CD8-positive, alpha-beta T cell (primary cell): ENCODE measurements at regions of chr4 and their contacts with region 1.

Region 1: DNA sequence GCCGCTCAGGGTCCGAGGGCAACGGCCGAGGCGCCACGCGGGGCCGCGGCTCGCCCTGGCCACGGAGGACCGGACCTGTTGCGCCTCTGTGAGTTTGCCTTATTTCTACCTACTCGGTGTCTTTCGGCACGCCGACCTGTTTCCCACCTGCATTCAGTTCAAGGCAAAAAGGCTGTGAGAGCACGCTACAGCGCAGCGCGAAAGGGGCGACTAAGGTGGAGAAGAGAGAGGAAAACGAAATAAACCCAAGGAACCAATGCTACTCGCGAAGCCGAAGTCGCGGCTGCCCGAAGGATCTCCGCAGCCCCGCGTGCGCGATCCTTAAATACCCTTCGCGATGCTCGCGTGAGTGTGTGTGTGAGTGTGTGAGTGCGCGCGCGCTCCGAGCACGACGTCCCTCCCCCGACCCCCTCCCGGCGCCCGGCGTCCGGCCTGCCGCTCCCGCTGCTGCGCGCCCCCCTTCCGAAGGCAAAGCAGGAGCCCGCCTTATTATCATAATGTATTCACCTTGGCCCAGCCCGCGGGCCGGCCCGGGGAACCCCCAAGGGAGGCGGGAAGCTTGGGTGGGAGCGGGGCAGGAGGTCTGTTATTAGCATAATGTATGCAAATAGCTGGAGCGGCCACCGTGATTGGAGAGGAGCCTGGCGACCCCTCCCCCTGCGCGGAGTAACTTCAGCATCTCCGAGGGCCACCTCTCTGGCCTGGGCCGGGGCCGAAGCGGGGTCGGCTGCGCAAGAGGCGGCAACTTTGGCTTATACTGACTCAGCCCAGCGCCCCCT is at the start of gene COL25A1:
- DNase-seq: peak in 7 of 9 experiments; percentile 25 to 70 (median 50)
- ATAC-seq: peak; percentile 78
- H3K4me3 ChIP-seq: peak within 1 kb of the TSS; percentile 54 to 79
- H3K4me3 Mint-ChIP-seq: peak within 1 kb of the TSS; percentile 80
- H3K27ac ChIP-seq: no peak within 1 kb of the TSS
- H3K27ac Mint-ChIP-seq: no peak within 1 kb of the TSS
- H3K4me1 ChIP-seq: peaks cover 12% of the 10 kb centered on the region
- H3K4me1 Mint-ChIP-seq: peaks cover 17% of the 10 kb centered on the region
- H3K27me3 ChIP-seq: peaks cover 25 to 30% of the 10 kb centered on the region in 2 experiments
- H3K27me3 Mint-ChIP-seq: peaks cover 44% of the 10 kb centered on the region
- CTCF ChIP-seq: no peak
- total RNA-seq, gene COL25A1: 0.71 TPM in 1 of 2 experiments, not detected in the other

Region 2: DNA sequence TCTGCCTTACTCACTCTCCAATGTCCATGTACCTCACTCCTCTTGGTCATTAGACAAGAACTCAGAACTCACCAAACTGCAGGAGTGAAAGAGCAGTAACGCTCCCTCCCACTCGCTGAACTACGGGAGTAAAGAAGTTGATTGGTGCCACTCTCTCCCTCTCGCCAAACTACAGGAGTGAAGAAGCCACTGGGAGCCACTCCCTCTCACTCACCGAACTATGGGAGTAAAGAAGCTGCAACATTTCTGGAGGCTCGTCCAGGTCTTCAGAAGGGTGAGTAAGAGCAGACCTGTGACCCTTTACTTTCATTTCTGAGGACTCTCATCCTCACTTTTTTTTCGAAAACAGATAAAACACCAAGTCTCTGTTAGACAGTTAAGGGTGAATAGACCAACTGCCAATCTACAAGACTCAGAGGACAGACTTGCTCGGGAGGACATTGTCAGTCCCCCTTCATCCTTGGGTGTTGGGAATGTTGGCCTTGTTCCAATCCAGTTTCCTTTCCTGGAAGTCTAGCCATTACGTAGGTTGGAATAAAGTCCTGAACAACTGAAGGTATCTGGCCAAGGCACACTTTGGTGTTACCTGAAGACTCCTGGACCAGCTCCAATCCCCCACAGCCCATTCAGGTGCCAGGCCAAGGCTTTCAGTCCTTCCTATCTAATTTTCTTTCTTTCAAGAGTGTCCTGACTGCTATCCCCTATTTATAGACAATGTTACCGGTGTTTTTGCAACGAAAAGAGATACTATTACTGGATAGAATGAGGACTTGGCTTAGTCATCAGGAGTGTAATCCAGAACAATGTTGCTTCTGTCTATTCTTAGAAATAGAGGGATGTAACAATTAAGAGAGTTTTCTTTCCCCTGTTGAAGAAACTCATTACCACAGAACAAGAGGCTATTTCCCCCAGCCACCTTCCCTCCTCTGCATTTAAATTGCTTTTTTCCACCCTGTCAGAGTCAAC is 10.9 kb after region 1 on chr4:
- CTCF ChIA-PET with region 1: no interaction called
- POLR2A ChIA-PET with region 1: interaction called, 4 read pairs
- intact Hi-C with region 1: loop called in 1 of 2 experiments (anchors 1 kb)
- DNase-seq: no peak
- ATAC-seq: no peak
- H3K4me3 ChIP-seq: no peak overlapping the region
- H3K4me3 Mint-ChIP-seq: no peak overlapping the region
- H3K27ac ChIP-seq: no peak overlapping the region
- H3K27ac Mint-ChIP-seq: no peak overlapping the region
- H3K4me1 ChIP-seq: no peaks in the 10 kb centered on the region
- H3K4me1 Mint-ChIP-seq: no peaks in the 10 kb centered on the region
- H3K27me3 ChIP-seq: no peaks in the 10 kb centered on the region
- H3K27me3 Mint-ChIP-seq: peaks cover 30% of the 10 kb centered on the region
- CTCF ChIP-seq: no peak

Region 3: GRCh38 chr4:109735566-109736365 is 433.2 kb after region 1 on chr4:
- CTCF ChIA-PET with region 1: no interaction called
- POLR2A ChIA-PET with region 1: no interaction called
- intact Hi-C with region 1: no loop called
- DNase-seq: no peak
- ATAC-seq: no peak
- H3K4me3 ChIP-seq: no peak overlapping the region
- H3K4me3 Mint-ChIP-seq: no peak overlapping the region
- H3K27ac ChIP-seq: no peak overlapping the region
- H3K27ac Mint-ChIP-seq: no peak overlapping the region
- H3K4me1 ChIP-seq: no peaks in the 10 kb centered on the region
- H3K4me1 Mint-ChIP-seq: no peaks in the 10 kb centered on the region
- H3K27me3 ChIP-seq: no peaks in the 10 kb centered on the region
- H3K27me3 Mint-ChIP-seq: no peaks in the 10 kb centered on the region
- CTCF ChIP-seq: no peak